Activated T-helper 1 cell treated with anti-CD3 and anti-CD28 coated beads, Interleukin-12 subunit alpha, Interleukin-12 subunit beta, Interleukin-2, Interleukin-4 antibody, amounts not matched to agents 30 ng/mL and 10 ng/mL and 1 ng/mL, durations not matched to agents 14 hours and 24 hours and 36 hours (primary cell): ENCODE measurements at regions of chr1 and their contacts with region 1.

Region 1: GRCh38 chr1:46489638-46490405 is at the start of gene DMBX1:
- DNase-seq: peak; percentile 26
- H3K4me3 Mint-ChIP-seq: peak within 1 kb of the TSS; percentile 80
- H3K27ac Mint-ChIP-seq: peak within 1 kb of the TSS; percentile 76
- H3K4me1 Mint-ChIP-seq: peaks cover 28% of the 10 kb centered on the region
- H3K27me3 Mint-ChIP-seq: peaks cover 89% of the 10 kb centered on the region
- total RNA-seq, gene DMBX1: not detected in 2 replicates

Region 2: DNA sequence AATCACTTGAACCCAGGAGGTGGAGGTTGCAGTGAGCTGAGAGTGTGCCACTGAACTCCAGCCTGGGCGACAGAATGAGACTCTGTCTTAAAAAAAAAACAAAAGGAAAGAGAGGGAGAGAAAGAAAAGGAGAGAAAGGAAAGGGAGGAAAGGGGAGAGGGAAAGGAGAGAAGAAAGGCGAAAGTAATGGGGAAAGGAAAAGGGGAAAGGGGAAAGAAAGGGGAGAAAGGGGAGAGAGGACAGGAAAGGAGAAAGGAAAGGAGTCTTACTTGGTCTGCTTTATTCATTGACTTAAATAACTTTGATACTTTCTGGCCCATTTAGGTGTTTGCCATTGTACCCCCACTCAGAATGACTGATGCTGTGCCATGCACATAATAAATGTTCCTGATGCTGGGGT is 137.5 kb before region 1 on chr1:
- intact Hi-C with region 1: no loop called
- DNase-seq: no peak
- H3K4me3 Mint-ChIP-seq: no peak overlapping the region
- H3K27ac Mint-ChIP-seq: no peak overlapping the region
- H3K4me1 Mint-ChIP-seq: peaks cover 11% of the 10 kb centered on the region
- H3K27me3 Mint-ChIP-seq: no peaks in the 10 kb centered on the region

Region 3: GRCh38 chr1:46448109-46448911 is 41.5 kb before region 1 on chr1:
- intact Hi-C with region 1: loop called (anchors 2 kb)
- DNase-seq: no peak
- H3K4me3 Mint-ChIP-seq: no peak overlapping the region
- H3K27ac Mint-ChIP-seq: no peak overlapping the region
- H3K4me1 Mint-ChIP-seq: peaks cover 5% of the 10 kb centered on the region
- H3K27me3 Mint-ChIP-seq: peaks cover 65% of the 10 kb centered on the region

Region 4: GRCh38 chr1:46659307-46659870 is 169.6 kb after region 1 on chr1:
- intact Hi-C with region 1: no loop called
- DNase-seq: no peak
- H3K4me3 Mint-ChIP-seq: no peak overlapping the region
- H3K27ac Mint-ChIP-seq: no peak overlapping the region
- H3K4me1 Mint-ChIP-seq: peaks cover 22% of the 10 kb centered on the region
- H3K27me3 Mint-ChIP-seq: no peaks in the 10 kb centered on the region

Region 5: GRCh38 chr1:47036764-47037163 is 546.9 kb after region 1 on chr1:
- intact Hi-C with region 1: no loop called
- DNase-seq: no peak
- H3K4me3 Mint-ChIP-seq: no peak overlapping the region
- H3K27ac Mint-ChIP-seq: no peak overlapping the region
- H3K4me1 Mint-ChIP-seq: no peaks in the 10 kb centered on the region
- H3K27me3 Mint-ChIP-seq: peaks cover 18% of the 10 kb centered on the region

Region 6: GRCh38 chr1:47225430-47226100 is 735.7 kb after region 1 on chr1:
- intact Hi-C with region 1: loop called (anchors 5 kb)
- DNase-seq: no peak
- H3K4me3 Mint-ChIP-seq: no peak overlapping the region
- H3K27ac Mint-ChIP-seq: no peak overlapping the region
- H3K4me1 Mint-ChIP-seq: peaks cover 6% of the 10 kb centered on the region
- H3K27me3 Mint-ChIP-seq: peaks cover 48% of the 10 kb centered on the region